ENCODE measurements at regions of chr4 and their contacts with region 1.

Region 1: GRCh38 chr4:176492646-176493302 is 173.0 kb downstream of the SPCS3 start:
- DNase-seq: no peak
- H3K4me3 ChIP-seq: no peak overlapping the region
- CTCF ChIP-seq: no peak
- POLR2A ChIP-seq: no peak

Region 2: DNA sequence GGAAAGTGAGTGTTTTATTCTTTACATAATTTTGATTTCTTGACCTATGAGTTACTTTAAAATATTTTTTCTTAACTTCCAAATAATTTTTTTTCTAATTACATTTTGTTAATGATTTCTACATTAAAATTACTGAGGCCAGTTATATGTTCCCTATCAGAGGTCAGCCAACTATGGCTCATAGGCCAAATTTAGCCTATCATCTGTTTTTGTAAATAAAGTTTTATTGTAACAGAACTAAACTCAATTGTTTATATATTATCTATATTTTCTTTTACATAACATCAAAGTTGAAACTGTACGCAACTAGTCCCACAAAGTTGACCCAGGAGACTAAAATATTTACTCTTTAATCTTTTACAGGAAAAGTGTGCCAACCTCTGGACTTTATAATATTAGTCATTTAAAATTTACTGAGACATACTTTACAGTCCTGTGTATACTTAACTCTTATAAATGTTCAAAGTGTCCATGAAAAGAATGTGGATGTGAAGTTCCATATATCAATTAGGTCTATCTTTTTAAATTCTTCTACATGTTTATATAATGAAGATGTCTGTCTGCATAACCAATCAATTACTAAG is 249.9 kb before region 1 on chr4:
- intact Hi-C with region 1: loop called (anchors 2 kb)
- DNase-seq: no peak
- H3K4me3 ChIP-seq: no peak overlapping the region
- CTCF ChIP-seq: no peak
- POLR2A ChIP-seq: no peak